Right ventricle myocardium superior (tissue), 1 donor: ENCODE measurements at regions of chr14 and their contacts with region 1.

Region 1: DNA sequence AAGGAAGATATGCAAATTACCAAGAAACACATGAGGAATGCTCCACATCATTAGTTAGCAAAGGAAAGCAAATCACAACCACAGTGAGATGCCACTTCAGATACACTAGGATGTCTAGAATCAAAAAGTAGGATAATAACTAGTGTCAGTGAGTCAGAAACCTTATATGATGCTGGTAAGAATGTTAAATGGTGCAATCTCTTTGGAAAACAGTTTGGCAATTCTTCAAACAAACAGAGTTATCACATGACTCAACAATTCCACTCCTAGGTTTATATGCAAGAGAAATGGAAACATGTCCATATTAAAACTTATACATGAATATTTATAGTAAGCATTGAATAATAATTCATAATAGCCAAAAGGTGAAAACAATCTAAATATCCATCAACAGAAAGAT is 220.9 kb downstream of the FOXG1 start:
- DNase-seq: no peak
- ATAC-seq: no peak

Region 2: DNA sequence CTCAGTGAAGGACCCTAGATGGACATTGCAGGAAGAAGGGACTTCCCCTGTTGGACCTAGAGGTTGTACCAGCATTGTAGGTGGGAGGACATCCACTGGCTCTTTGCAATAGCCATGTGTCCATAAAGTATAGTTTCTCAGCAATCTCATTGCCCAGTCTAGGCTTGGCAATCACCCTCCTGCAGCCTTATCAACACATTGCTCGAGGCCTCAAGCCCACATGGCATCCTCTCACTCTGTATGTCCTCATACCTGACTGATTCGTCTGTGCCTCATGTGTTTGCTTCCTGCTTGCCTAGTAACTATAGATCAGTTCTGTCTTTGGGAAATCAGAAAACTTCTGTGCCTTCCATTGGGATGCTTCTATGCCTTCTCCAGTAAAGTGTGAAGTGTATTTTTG is 150.0 kb before region 1 on chr14:
- intact Hi-C with region 1: loop called (anchors 5 kb)
- DNase-seq: no peak
- ATAC-seq: no peak